CD8-positive, alpha-beta T cell (primary cell): ENCODE measurements at regions of chr6 and their contacts with region 1.

Region 1: DNA sequence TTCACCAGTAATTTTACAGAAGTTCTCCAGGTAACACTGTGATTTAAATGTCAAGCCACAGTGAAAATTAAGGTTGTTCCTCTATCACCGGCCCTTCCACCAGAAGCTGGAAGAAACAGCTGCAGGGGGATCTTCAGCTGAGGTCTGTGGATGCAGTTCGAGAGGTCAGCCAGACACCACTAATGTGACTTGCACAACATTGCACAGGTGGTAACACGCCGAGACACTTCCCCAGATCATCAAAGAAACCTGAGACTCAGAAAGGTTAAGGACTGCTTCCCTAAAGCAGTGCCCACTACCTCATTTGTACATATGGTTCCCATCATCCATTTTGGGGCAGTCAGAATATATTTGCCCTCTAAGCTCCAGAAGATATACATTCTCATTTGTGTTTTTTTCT is 8.1 kb upstream of the SERPINB9 start:
- DNase-seq: no peak
- ATAC-seq: no peak
- H3K4me3 ChIP-seq: no peak overlapping the region
- H3K4me3 Mint-ChIP-seq: no peak overlapping the region
- H3K27ac ChIP-seq: no peak overlapping the region
- H3K27ac Mint-ChIP-seq: no peak overlapping the region
- H3K4me1 ChIP-seq: no peaks in the 10 kb centered on the region
- H3K4me1 Mint-ChIP-seq: peaks cover 33% of the 10 kb centered on the region
- H3K27me3 ChIP-seq: no peaks in the 10 kb centered on the region
- H3K27me3 Mint-ChIP-seq: no peaks in the 10 kb centered on the region
- CTCF ChIP-seq: no peak

Region 2: GRCh38 chr6:2738373-2738979 is 172.7 kb before region 1 on chr6:
- CTCF ChIA-PET with region 1: interaction called, 3 read pairs
- POLR2A ChIA-PET with region 1: no interaction called
- intact Hi-C with region 1: loop called in 1 of 2 experiments (anchors 1 kb)
- DNase-seq: peak in 8 of 9 experiments; percentile 26 to 71 (median 60)
- ATAC-seq: peak; percentile 77
- H3K4me3 ChIP-seq: no peak overlapping the region
- H3K4me3 Mint-ChIP-seq: no peak overlapping the region
- H3K27ac ChIP-seq: no peak overlapping the region
- H3K27ac Mint-ChIP-seq: no peak overlapping the region
- H3K4me1 ChIP-seq: no peaks in the 10 kb centered on the region
- H3K4me1 Mint-ChIP-seq: no peaks in the 10 kb centered on the region
- H3K27me3 ChIP-seq: no peaks in the 10 kb centered on the region
- H3K27me3 Mint-ChIP-seq: peaks cover 4% of the 10 kb centered on the region
- CTCF ChIP-seq: peak; percentile 70

Region 3: GRCh38 chr6:2791124-2791974 is 119.8 kb before region 1 on chr6:
- CTCF ChIA-PET with region 1: interaction called, 11 read pairs
- POLR2A ChIA-PET with region 1: no interaction called
- intact Hi-C with region 1: loop called (anchors 1 to 5 kb)
- DNase-seq: peak in 8 of 9 experiments; percentile 21 to 75 (median 47)
- ATAC-seq: peak; percentile 79
- H3K4me3 ChIP-seq: no peak overlapping the region
- H3K4me3 Mint-ChIP-seq: peak overlapping the region; percentile 13
- H3K27ac ChIP-seq: peak overlapping the region in 1 of 2 experiments; percentile 10
- H3K27ac Mint-ChIP-seq: peak overlapping the region; percentile 77
- H3K4me1 ChIP-seq: peaks cover 33% of the 10 kb centered on the region
- H3K4me1 Mint-ChIP-seq: peaks cover 32% of the 10 kb centered on the region
- H3K27me3 ChIP-seq: no peaks in the 10 kb centered on the region
- H3K27me3 Mint-ChIP-seq: no peaks in the 10 kb centered on the region
- CTCF ChIP-seq: peak; percentile 73

Region 4: DNA sequence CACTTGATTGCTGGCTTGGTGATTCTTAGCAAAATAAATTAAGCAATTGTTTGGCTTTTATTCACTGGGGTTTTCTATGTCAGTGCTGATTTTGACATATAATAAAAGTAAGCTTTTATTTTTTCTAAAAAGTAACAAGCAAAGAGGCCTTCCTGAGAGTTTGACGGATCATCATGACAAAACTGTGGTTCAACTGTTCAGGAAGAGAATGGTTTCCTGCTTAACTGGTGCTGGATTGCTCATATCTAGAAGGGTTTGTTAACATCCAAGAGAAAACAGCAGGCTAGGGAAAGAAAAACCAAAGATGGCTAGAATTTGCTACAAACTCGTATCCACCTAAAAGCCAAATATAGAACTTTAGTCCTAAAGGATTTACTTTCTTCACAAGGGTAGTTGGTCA is 90.8 kb before region 1 on chr6:
- CTCF ChIA-PET with region 1: no interaction called
- POLR2A ChIA-PET with region 1: no interaction called
- intact Hi-C with region 1: no loop called
- DNase-seq: no peak
- ATAC-seq: no peak
- H3K4me3 ChIP-seq: no peak overlapping the region
- H3K4me3 Mint-ChIP-seq: no peak overlapping the region
- H3K27ac ChIP-seq: no peak overlapping the region
- H3K27ac Mint-ChIP-seq: no peak overlapping the region
- H3K4me1 ChIP-seq: no peaks in the 10 kb centered on the region
- H3K4me1 Mint-ChIP-seq: peaks cover 22% of the 10 kb centered on the region
- H3K27me3 ChIP-seq: no peaks in the 10 kb centered on the region
- H3K27me3 Mint-ChIP-seq: no peaks in the 10 kb centered on the region
- CTCF ChIP-seq: no peak

Region 5: GRCh38 chr6:2876210-2877056 is 34.7 kb before region 1 on chr6:
- CTCF ChIA-PET with region 1: interaction called, 15 read pairs
- POLR2A ChIA-PET with region 1: interaction called, 4 read pairs
- intact Hi-C with region 1: no loop called
- DNase-seq: peak in 3 of 9 experiments; percentile 38 to 67 (median 57)
- ATAC-seq: peak; percentile 9
- H3K4me3 ChIP-seq: peak overlapping the region; percentile 33 to 65
- H3K4me3 Mint-ChIP-seq: peak overlapping the region; percentile 87
- H3K27ac ChIP-seq: peak overlapping the region; percentile 24 to 77
- H3K27ac Mint-ChIP-seq: peak overlapping the region; percentile 93
- H3K4me1 ChIP-seq: peaks cover 68% of the 10 kb centered on the region
- H3K4me1 Mint-ChIP-seq: peaks cover 78% of the 10 kb centered on the region
- H3K27me3 ChIP-seq: no peaks in the 10 kb centered on the region
- H3K27me3 Mint-ChIP-seq: no peaks in the 10 kb centered on the region
- CTCF ChIP-seq: no peak

Region 6: DNA sequence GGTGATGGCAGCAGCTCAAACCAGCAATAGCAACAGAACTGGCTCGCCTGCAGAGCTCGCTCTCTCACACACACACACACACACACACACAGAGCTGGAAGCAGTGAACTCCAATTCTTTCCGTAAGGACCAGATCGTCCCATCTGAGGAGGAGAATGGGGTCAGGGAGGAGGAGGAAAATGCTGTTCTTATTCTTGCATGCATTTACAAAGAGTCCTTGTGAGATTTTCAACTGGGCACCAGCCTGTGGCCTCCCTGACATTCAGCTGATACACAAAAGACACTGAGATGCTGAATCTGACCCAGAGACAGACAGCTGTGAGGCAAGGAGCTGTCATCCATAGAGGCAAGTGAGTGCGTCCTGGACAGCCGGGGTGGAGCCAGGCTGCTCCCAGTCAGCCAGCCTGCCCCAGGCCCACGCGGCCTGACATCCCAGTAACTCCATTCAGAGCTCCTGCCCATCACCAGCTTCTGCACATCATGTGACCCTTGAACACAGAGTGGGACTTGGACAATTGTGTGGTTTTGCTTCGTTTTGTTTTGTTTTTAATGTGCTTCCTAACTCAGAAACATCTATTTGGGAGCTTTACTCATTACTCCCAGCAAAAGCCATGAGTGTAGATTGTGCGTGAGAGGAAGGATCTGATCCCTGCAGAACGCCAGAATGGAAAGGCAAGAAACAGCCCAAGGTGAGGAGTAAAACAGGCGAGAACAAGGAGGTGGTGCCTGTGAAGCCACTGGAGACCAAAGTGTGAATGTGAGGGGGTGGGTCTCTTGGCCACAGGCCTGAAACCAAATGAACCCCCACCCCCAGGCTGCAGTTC is 10.1 kb before region 1 on chr6:
- CTCF ChIA-PET with region 1: interaction called, 19 read pairs
- POLR2A ChIA-PET with region 1: interaction called, 5 read pairs
- intact Hi-C with region 1: no loop called
- DNase-seq: peak in 1 of 9 experiments; percentile 46
- ATAC-seq: no peak
- H3K4me3 ChIP-seq: peak overlapping the region; percentile 73 to 90
- H3K4me3 Mint-ChIP-seq: peak overlapping the region; percentile 99
- H3K27ac ChIP-seq: peak overlapping the region; percentile 67 to 82
- H3K27ac Mint-ChIP-seq: peak overlapping the region; percentile 96
- H3K4me1 ChIP-seq: peaks cover 37% of the 10 kb centered on the region
- H3K4me1 Mint-ChIP-seq: peaks cover 60% of the 10 kb centered on the region
- H3K27me3 ChIP-seq: no peaks in the 10 kb centered on the region
- H3K27me3 Mint-ChIP-seq: no peaks in the 10 kb centered on the region
- CTCF ChIP-seq: no peak